ENCODE measurements at regions of chr3 and their contacts with region 1.

Region 1: GRCh38 chr3:172635588-172635987 is 75.3 kb downstream of the NCEH1 start:
- DNase-seq: peak; percentile 71 to 86
- H3K4me3 ChIP-seq: no peak overlapping the region
- H3K27ac ChIP-seq: peak overlapping the region; percentile 54
- H3K4me1 ChIP-seq: peaks cover 37% of the 10 kb centered on the region
- H3K27me3 ChIP-seq: no peaks in the 10 kb centered on the region
- CTCF ChIP-seq: no peak

Region 2: DNA sequence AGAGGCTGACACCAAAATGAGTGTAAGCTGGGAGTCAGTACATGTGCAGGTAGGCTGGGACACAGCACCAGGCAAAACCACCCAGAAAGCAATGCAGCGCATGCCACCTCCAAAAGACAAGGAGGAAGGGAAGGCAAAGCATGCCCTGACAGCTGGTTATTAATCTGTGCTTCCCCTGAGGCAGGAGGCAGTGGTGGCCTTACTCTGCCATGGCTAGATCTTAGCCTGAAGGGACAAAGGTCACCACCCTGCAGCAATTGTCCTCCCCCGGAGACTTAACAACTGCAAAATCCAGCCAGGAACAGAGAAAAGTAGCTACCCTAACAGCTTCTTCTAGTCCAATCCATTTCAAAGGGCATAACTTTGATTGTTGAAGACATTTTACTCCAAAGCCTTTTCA is 899.0 kb before region 1 on chr3:
- CTCF ChIA-PET with region 1: no interaction called
- POLR2A ChIA-PET with region 1: no interaction called
- intact Hi-C with region 1: no loop called
- DNase-seq: no peak
- H3K4me3 ChIP-seq: no peak overlapping the region
- H3K27ac ChIP-seq: no peak overlapping the region
- H3K4me1 ChIP-seq: no peaks in the 10 kb centered on the region
- H3K27me3 ChIP-seq: no peaks in the 10 kb centered on the region
- CTCF ChIP-seq: no peak

Region 3: DNA sequence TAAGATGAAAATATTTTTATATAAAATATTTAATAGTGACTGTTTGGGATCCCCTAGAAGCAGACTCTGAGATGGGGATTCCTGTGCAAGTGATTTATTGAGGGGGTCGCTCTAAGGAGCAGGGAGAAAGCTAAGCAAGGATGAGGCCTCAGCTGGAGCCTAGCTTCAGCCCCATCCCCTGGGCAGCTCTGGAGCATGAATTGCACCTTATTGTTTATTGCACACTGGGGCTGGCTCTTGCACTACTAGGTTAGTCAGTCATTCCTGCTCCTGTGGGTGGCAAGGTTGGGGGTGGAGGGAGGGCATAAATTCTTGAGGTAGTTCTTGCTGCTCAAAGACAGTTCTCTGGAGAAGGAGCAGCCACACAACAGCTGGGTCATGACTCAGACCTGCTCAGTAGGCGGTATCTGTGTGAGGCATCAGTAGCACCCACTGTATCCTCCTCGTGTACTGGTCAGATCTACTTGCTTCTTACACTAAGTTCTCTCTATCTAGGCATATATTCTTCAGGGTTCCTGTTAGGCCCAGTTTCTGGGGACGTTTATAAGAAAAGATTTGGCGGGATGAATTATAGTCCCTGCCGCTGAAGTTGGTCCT is 85.1 kb before region 1 on chr3:
- CTCF ChIA-PET with region 1: no interaction called
- POLR2A ChIA-PET with region 1: no interaction called
- intact Hi-C with region 1: no loop called
- DNase-seq: peak; percentile 79 to 88
- H3K4me3 ChIP-seq: no peak overlapping the region
- H3K27ac ChIP-seq: no peak overlapping the region
- H3K4me1 ChIP-seq: peaks cover 50% of the 10 kb centered on the region
- H3K27me3 ChIP-seq: no peaks in the 10 kb centered on the region
- CTCF ChIP-seq: no peak

Region 4: DNA sequence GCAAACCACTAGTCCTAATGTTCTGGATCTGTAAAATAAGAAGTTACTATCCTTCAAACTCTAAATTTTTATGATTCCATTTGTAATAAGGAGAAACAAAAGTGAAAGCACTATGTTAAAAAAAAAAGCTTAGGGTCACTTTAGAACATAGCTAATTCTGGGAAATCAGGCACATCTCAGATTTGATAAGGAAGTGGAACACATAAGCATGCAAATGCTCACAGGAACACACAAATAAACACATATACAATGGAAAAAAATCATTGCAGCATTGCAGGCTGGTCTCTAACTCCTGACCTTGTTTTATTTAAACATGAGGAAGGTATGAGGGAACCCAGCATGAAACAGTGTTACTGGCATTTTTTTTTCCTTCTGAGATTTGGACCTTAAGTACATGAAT is 49.2 kb before region 1 on chr3:
- CTCF ChIA-PET with region 1: no interaction called
- POLR2A ChIA-PET with region 1: interaction called, 20 read pairs
- intact Hi-C with region 1: no loop called
- DNase-seq: no peak
- H3K4me3 ChIP-seq: no peak overlapping the region
- H3K27ac ChIP-seq: no peak overlapping the region
- H3K4me1 ChIP-seq: no peaks in the 10 kb centered on the region
- H3K27me3 ChIP-seq: no peaks in the 10 kb centered on the region
- CTCF ChIP-seq: no peak

Region 5: GRCh38 chr3:172612871-172613678 is 22.5 kb before region 1 on chr3:
- CTCF ChIA-PET with region 1: no interaction called
- POLR2A ChIA-PET with region 1: interaction called, 22 read pairs
- intact Hi-C with region 1: no loop called
- DNase-seq: no peak
- H3K4me3 ChIP-seq: no peak overlapping the region
- H3K27ac ChIP-seq: no peak overlapping the region
- H3K4me1 ChIP-seq: no peaks in the 10 kb centered on the region
- H3K27me3 ChIP-seq: no peaks in the 10 kb centered on the region
- CTCF ChIP-seq: no peak

Region 6: DNA sequence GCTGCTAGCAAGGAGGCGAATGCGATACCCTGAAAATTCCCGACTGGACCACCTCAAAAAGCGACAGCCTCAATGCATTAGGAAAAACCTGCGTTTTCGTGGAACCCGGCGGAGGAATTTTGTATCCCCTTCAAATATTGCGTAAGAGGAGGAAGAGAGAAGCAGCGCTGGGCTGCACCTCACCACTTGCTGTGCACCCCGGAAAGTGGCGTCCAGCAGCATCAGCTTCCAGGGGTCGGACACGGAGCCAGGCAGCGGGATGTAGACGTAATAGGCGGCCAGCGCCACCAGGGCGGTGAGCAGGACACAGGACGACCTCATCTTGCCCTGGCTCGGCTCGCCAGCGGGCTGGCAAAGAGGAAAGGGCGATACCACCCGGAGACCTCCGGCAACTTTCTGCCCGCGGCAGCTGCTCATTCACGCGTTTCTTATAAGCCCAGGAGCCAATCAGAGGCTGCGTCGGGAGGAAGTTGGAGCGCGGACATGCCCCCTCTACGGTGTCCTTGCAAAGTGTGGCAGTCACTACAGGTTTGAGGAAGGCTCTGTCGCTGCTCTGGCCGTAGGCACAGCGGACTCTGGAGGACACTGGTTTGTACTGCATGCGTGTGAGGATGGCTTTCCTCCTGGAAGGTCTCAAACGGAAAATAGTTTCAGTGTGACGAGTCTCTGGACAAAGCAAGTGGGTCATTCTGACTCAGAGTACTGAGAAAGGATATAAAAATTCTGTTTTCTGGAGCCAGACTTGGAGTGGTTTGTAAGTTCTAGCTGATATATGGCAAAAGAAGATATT is 75.3 kb after region 1 on chr3 and contains the start of gene NCEH1:
- CTCF ChIA-PET with region 1: no interaction called
- POLR2A ChIA-PET with region 1: no interaction called
- intact Hi-C with region 1: loop called (anchors 2 kb)
- DNase-seq: peak; percentile 98 to 100
- H3K4me3 ChIP-seq: peak within 1 kb of the TSS; percentile 83
- H3K27ac ChIP-seq: peak within 1 kb of the TSS; percentile 98
- H3K4me1 ChIP-seq: peaks cover 62% of the 10 kb centered on the region
- H3K27me3 ChIP-seq: no peaks in the 10 kb centered on the region
- CTCF ChIP-seq: peak; percentile 89
- total RNA-seq, gene NCEH1: 39.6 and 43.5 TPM in 2 replicates

Region 7: GRCh38 chr3:172717493-172718088 is 82.0 kb after region 1 on chr3:
- CTCF ChIA-PET with region 1: no interaction called
- POLR2A ChIA-PET with region 1: no interaction called
- intact Hi-C with region 1: loop called (anchors 1 kb)
- DNase-seq: no peak
- H3K4me3 ChIP-seq: no peak overlapping the region
- H3K27ac ChIP-seq: no peak overlapping the region
- H3K4me1 ChIP-seq: peaks cover 44% of the 10 kb centered on the region
- H3K27me3 ChIP-seq: no peaks in the 10 kb centered on the region
- CTCF ChIP-seq: peak; percentile 53; the same call in 1 of the 2 replicates

Measured in PC-9 (cell line).